Naive thymus-derived CD4-positive, alpha-beta T cell (primary cell): ENCODE measurements at regions of chr1 and their contacts with region 1.

Region 1: DNA sequence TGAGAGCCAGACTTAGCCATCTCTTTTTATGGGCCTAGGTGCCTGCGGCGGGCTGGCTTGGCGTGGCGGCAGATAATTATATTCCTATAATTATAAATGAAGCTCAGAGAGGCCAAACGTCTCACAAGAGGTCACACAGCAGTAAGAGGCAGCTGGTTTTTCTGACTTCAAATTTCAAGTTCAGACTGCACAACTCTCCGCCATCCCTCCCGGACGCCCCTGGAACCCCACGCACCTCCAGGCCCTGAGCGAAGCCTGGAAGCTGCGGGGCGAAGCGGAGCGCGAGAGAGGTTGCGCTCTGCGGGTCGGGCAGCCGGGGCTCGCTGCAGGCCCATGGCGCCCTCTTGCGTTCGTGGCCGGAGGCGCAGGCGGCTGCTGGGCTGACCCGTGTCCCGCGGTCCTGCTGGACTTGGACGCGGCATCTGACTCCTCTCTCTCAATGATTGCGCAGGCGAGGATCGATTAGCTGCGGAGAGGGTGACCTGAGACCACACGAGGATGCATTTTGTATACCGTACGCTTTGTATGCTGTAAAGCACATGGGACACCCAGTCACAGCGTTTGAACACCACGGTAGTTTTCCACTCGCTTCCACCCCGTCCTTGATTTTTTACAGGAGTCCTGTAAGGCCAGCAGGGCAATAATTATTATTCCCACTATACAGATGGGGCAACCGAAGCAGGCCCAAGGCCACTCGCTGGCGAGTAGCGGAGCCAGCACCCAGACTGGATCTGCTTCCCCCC is 272.7 kb downstream of the FOXD2 start:
- DNase-seq: peak; percentile 20 to 83 (median 57)
- ATAC-seq: peak; percentile 83
- H3K4me3 ChIP-seq: peak overlapping the region; percentile 20
- H3K4me3 Mint-ChIP-seq: peak overlapping the region in 7 of 10 donors; percentile 3 to 75 (median 57)
- H3K27ac ChIP-seq: no peak overlapping the region
- H3K27ac Mint-ChIP-seq: no peak overlapping the region
- H3K4me1 ChIP-seq: peaks cover 8 to 10% of the 10 kb centered on the region in 2 donors
- H3K4me1 Mint-ChIP-seq: peaks cover 0 to 12% (median 5%) of the 10 kb centered on the region in 7 donors
- H3K27me3 ChIP-seq: peaks cover 5 to 20% of the 10 kb centered on the region in 2 donors
- H3K27me3 Mint-ChIP-seq: peaks cover 54 to 82% (median 68%) of the 10 kb centered on the region in 5 donors

Region 2: GRCh38 chr1:47192458-47193384 is 517.8 kb before region 1 on chr1:
- CTCF ChIA-PET with region 1: interaction called, 6 read pairs
- POLR2A ChIA-PET with region 1: no interaction called
- intact Hi-C with region 1: loop called in 1 of 2 experiments (anchors 1 kb)
- DNase-seq: peak; percentile 25 to 72 (median 53)
- ATAC-seq: peak; percentile 84
- H3K4me3 ChIP-seq: no peak overlapping the region
- H3K4me3 Mint-ChIP-seq: no peak overlapping the region
- H3K27ac ChIP-seq: no peak overlapping the region
- H3K27ac Mint-ChIP-seq: peak overlapping the region in 1 of 9 donors; percentile 48
- H3K4me1 ChIP-seq: no peaks in the 10 kb centered on the region
- H3K4me1 Mint-ChIP-seq: peaks cover 0 to 2% (median 0%) of the 10 kb centered on the region in 7 donors
- H3K27me3 ChIP-seq: no peaks in the 10 kb centered on the region
- H3K27me3 Mint-ChIP-seq: peaks cover 7 to 20% (median 9%) of the 10 kb centered on the region in 5 donors

Region 3: DNA sequence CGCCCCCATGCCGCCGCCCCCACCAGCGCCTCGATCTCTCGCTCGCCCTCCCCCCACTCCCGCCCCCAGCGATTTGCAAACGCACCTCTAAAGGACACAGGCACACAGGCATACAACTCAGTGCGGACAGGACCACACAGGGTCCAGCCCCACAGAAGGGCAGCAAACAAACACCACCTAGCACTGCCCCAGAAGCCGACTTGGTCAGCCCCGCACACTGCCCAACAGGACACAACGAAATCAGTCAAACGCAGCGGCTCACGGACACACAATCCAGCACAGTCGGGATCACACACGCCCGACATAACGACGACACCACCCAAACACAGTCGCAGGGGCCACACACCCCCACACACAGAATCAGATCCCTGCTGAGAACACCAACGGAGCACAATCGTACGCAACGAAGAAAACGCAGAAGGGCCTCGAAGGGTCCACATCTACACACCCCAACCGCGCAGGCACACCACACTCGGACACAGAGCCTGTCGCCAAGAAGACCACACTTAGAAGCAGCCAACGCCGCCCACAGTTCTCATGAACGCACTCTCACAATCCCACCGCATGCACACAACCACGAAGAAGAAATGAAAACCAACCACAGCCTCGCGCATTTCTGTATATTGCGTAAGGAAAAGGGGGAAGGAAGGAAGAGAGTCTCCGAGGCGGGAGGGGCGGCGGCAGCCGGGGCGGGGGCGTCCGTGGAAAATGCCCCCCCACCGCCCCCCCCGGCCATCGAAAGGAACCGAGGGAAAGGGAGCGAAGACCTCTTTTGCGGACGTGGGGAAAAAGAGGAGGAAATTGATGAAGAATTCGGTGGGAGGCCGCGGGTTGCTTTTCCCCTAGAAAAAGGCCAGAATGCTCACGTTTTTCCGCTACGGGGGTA is 479.0 kb before region 1 on chr1:
- CTCF ChIA-PET with region 1: no interaction called
- POLR2A ChIA-PET with region 1: no interaction called
- intact Hi-C with region 1: loop called in 1 of 2 experiments (anchors 5 kb)
- DNase-seq: peak in 4 of 9 donors; percentile 14 to 33 (median 18)
- ATAC-seq: peak; percentile 55
- H3K4me3 ChIP-seq: peak overlapping the region; percentile 4
- H3K4me3 Mint-ChIP-seq: peak overlapping the region; percentile 74 to 94 (median 84)
- H3K27ac ChIP-seq: no peak overlapping the region
- H3K27ac Mint-ChIP-seq: peak overlapping the region in 1 of 9 donors; percentile 62
- H3K4me1 ChIP-seq: peaks cover 12 to 13% of the 10 kb centered on the region in 2 donors
- H3K4me1 Mint-ChIP-seq: peaks cover 8 to 37% (median 28%) of the 10 kb centered on the region in 7 donors
- H3K27me3 ChIP-seq: peaks cover 23 to 45% of the 10 kb centered on the region in 2 donors
- H3K27me3 Mint-ChIP-seq: peaks cover 70 to 95% (median 90%) of the 10 kb centered on the region in 5 donors

Region 4: GRCh38 chr1:47388891-47389238 is 321.6 kb before region 1 on chr1:
- CTCF ChIA-PET with region 1: no interaction called
- POLR2A ChIA-PET with region 1: no interaction called
- intact Hi-C with region 1: loop called (anchors 1 to 2 kb)
- DNase-seq: peak in 4 of 9 donors; percentile 12 to 43 (median 16)
- ATAC-seq: peak; percentile 57
- H3K4me3 ChIP-seq: no peak overlapping the region
- H3K4me3 Mint-ChIP-seq: no peak overlapping the region
- H3K27ac ChIP-seq: no peak overlapping the region
- H3K27ac Mint-ChIP-seq: no peak overlapping the region
- H3K4me1 ChIP-seq: no peaks in the 10 kb centered on the region
- H3K4me1 Mint-ChIP-seq: peaks cover 0 to 4% (median 0%) of the 10 kb centered on the region in 7 donors
- H3K27me3 ChIP-seq: no peaks in the 10 kb centered on the region
- H3K27me3 Mint-ChIP-seq: peaks cover 3 to 9% (median 7%) of the 10 kb centered on the region in 5 donors

Region 5: GRCh38 chr1:47432071-47433036 is 278.1 kb before region 1 on chr1:
- CTCF ChIA-PET with region 1: interaction called, 11 read pairs
- POLR2A ChIA-PET with region 1: no interaction called
- intact Hi-C with region 1: loop called (anchors 1 kb)
- DNase-seq: peak in 8 of 9 donors; percentile 44 to 68 (median 58)
- ATAC-seq: peak; percentile 54
- H3K4me3 ChIP-seq: peak overlapping the region; percentile 20
- H3K4me3 Mint-ChIP-seq: peak overlapping the region; percentile 30 to 81 (median 75)
- H3K27ac ChIP-seq: no peak overlapping the region
- H3K27ac Mint-ChIP-seq: peak overlapping the region in 2 of 9 donors; percentile 38 to 55
- H3K4me1 ChIP-seq: peaks cover 8 to 38% of the 10 kb centered on the region in 2 donors
- H3K4me1 Mint-ChIP-seq: peaks cover 25 to 47% (median 39%) of the 10 kb centered on the region in 7 donors
- H3K27me3 ChIP-seq: peaks cover 0 to 25% of the 10 kb centered on the region in 2 donors
- H3K27me3 Mint-ChIP-seq: peaks cover 46 to 52% (median 49%) of the 10 kb centered on the region in 5 donors